ENCODE measurements at regions of chr16 and their contacts with region 1.

Region 1: GRCh38 chr16:89241187-89242007 is 23.9 kb downstream of the ZNF778 start:
- DNase-seq: peak; percentile 81
- CTCF ChIP-seq: no peak

Region 2: DNA sequence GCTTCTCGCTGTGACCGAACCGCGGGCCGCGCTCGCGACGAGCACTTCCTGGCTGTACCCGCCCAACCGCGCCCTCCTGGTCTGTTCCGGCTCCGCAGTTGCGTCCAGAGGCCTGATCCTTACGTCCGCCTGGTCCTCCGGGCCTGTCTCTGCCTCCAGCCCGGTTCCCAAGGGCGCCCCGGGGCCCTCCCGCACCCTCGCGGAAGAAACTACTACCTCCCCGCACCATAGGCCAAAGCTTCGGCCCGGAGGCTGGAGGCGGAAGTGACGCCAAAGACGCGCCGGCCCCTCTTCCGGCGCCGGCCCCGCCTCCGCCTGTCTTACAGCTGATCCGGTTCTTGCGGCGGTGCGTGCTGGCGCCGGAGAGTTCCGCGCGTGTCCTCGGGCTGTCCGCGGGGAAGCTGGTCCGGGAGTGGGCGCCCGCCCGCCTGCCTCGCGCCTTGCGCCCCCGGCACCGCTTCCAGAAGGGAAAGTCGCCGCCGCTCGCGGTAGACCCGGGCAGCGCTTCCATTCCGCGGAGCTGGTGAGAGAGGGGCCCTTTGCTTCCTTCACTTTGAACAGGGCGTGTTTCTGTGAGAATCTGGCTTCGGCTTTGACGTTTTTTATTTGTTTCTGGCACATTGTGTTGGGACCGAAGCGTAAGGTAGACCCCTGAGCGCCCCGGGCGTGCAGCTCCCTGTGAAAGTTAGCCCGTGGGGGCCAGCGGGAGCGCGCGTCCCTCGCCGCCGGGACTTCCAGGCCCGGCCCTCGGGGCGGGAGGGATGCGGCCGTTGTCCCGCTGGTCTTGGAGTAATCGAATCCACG is 23.8 kb before region 1 on chr16 and contains the start of gene ZNF778:
- CTCF ChIA-PET with region 1: interaction called, 11 read pairs
- POLR2A ChIA-PET with region 1: interaction called, 4 read pairs
- DNase-seq: peak; percentile 94
- CTCF ChIP-seq: no peak

Measured in GM10248 (cell line).